ENCODE measurements at regions of chr2 and their contacts with region 1.

Region 1: GRCh38 chr2:56522605-56523089 is 338.9 kb downstream of the CCDC85A start:
- DNase-seq: no peak
- H3K4me3 ChIP-seq: no peak overlapping the region
- H3K27ac ChIP-seq: no peak overlapping the region
- H3K4me1 ChIP-seq: no peaks in the 10 kb centered on the region
- H3K27me3 ChIP-seq: no peaks in the 10 kb centered on the region
- CTCF ChIP-seq: no peak
- EP300 ChIP-seq: no peak
- POLR2A ChIP-seq: no peak

Region 2: GRCh38 chr2:54927085-54927750 is 1595.4 kb before region 1 on chr2:
- in situ Hi-C with region 1: no loop called
- intact Hi-C with region 1: no loop called
- DNase-seq: no peak
- H3K4me3 ChIP-seq: no peak overlapping the region
- H3K27ac ChIP-seq: no peak overlapping the region
- H3K4me1 ChIP-seq: no peaks in the 10 kb centered on the region
- H3K27me3 ChIP-seq: no peaks in the 10 kb centered on the region
- CTCF ChIP-seq: no peak
- EP300 ChIP-seq: no peak
- POLR2A ChIP-seq: no peak

Region 3: DNA sequence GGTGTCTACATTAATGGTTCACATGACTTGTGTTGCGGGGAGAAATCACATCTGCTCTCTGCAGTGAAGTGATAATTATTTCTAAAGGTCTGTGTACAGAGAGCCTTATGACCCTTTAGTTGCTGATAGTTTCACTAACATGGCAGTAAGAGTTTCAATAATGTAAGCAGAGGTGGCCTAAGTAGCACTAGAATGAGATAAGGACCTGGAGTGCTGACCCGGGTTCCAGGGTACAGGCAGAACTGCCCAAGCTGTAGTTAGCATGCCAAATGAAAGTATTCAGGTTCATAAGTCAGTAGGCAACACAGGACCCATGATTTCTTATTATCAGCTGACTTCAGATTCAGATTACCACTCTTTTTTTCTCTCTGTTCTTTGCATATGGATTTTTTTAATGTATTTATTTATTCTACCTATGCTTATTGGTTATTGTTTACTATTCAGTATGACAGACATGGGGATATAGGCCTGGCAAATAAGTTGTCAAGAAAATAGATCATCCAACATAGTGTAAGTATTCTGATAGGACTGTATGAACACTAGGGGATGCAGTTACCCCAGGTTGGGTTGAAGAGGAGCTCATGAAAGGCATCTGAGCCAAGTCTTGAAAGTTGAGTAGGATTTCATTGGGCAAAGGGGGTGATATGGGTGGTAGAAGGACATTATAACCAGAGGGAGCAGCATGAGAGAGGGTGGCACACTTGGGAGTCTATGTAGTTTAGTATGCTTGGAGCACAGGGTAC is 233.6 kb before region 1 on chr2:
- in situ Hi-C with region 1: no loop called
- intact Hi-C with region 1: no loop called
- DNase-seq: no peak
- H3K4me3 ChIP-seq: no peak overlapping the region
- H3K27ac ChIP-seq: no peak overlapping the region
- H3K4me1 ChIP-seq: no peaks in the 10 kb centered on the region
- H3K27me3 ChIP-seq: no peaks in the 10 kb centered on the region
- CTCF ChIP-seq: peak in 1 of 5 experiments; percentile 22
- EP300 ChIP-seq: no peak
- POLR2A ChIP-seq: no peak

Region 4: DNA sequence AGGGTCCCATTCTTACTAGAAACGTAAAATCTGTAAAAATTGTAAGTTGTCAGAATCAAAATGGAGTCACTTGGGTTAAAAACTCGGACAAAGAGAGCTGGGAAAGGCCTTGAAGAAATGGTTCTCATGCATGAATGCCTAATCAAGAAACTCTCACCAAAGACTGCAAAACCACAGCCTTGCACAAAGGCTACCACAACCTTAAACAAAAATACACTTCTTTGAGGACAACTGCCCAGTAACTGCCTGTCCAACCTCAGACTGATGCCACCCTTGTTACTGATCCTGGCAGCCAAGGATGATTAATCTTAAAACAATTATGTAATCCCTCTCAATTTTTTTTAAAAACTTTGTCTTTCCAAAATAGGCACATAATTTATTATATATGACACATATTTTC is 39.6 kb before region 1 on chr2:
- in situ Hi-C with region 1: loop called in 1 of 4 experiments (anchors 5 kb)
- intact Hi-C with region 1: no loop called
- DNase-seq: no peak
- H3K4me3 ChIP-seq: no peak overlapping the region
- H3K27ac ChIP-seq: no peak overlapping the region
- H3K4me1 ChIP-seq: no peaks in the 10 kb centered on the region
- H3K27me3 ChIP-seq: no peaks in the 10 kb centered on the region
- CTCF ChIP-seq: no peak
- EP300 ChIP-seq: no peak
- POLR2A ChIP-seq: no peak

Measured in transverse colon (tissue), 4 donors.